Activated CD4-positive, alpha-beta memory T cell treated with anti-CD3 and anti-CD28 coated beads, Interleukin-2, amount 10 ng/mL, durations not matched to agents 7 days and 5 days (primary cell): ENCODE measurements at regions of chr6 and their contacts with region 1.

Region 1: DNA sequence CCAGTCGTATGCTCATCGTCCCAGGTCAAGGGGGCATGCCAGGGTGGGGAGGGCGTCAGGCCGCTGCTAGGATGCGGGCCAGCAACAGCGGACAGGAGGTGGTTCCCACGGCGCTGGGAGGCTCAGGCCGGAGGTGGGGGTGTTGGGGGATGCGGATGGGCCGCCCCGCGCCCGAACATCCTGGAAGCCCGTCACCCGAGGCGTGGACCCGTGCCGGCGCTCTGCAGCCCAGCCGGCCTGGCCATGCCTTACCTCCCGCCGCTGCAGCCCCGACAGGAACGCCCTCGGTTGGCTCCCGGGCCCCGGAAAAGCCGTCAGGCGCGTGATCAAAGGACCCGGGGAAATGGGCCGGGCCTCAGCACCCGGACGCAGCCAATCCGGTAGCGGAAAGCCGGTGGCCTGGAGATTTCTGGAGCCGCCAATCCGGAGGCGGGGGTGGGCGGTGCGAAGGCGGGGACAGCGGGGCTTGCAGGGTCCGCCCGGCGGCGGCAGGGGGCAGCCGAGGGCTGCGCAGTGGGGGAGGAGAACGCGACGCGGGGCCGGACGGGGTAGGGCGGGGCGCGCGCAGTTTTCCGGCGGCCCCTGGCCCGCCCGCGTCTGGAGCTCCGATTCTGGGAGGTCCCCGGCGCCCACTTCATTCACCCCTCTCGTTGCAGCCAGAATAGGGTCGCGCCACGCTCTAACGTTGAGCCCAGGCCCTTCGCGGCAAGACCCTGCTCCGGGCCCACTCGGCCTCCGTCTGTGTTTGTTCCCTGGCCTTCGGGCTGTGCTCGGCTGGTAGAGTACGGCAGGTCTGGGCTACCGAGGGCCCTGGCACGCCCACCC is at the start of gene SMIM29:
- DNase-seq: peak; percentile 98
- H3K4me3 Mint-ChIP-seq: peak within 1 kb of the TSS; percentile 95
- H3K27ac Mint-ChIP-seq: peak within 1 kb of the TSS; percentile 94
- H3K4me1 Mint-ChIP-seq: peaks cover 53% of the 10 kb centered on the region
- H3K27me3 Mint-ChIP-seq: peaks cover 3% of the 10 kb centered on the region
- total RNA-seq, gene SMIM29: 38.3 to 38.4 TPM

Region 2: DNA sequence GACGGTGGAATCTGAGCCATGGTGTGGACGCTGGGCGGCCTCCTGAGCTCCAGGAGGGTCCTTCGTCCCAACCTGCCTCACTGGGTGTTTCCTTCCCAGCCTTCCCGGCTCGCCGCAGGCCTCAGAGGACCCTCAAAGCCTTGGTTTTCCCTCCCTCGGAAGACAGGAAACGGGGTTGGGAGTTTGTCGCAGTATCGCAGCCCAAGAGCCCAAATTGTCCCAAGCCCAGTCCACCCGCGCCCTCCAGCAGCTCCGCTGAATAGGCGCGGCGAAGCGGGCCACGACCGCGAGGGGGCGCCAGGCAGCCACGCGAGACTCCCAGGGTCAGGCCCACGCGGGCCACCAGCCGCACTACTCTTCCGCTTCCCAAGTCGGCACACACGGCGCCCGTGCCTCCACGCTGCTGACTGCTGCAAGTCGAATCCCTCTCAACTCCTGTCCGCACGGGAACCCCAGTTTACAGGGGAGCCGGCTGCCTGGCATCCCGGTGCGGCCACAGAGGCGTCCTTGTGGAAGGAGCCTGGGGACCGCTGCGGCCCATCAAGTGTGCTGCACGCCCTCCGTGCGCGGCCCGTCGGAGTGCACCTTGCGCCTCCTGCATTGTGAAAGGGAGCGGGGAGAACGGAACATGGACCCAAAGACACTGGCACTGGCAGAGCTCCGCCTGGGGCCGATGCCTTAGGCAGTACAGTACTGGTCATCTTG is 52.7 kb before region 1 on chr6:
- CTCF ChIA-PET with region 1: interaction called, 16 read pairs
- POLR2A ChIA-PET with region 1: interaction called, 4 read pairs
- DNase-seq: peak; percentile 87
- H3K4me3 Mint-ChIP-seq: peak overlapping the region; percentile 73
- H3K27ac Mint-ChIP-seq: no peak overlapping the region
- H3K4me1 Mint-ChIP-seq: peaks cover 3% of the 10 kb centered on the region
- H3K27me3 Mint-ChIP-seq: peaks cover 11% of the 10 kb centered on the region

Region 3: DNA sequence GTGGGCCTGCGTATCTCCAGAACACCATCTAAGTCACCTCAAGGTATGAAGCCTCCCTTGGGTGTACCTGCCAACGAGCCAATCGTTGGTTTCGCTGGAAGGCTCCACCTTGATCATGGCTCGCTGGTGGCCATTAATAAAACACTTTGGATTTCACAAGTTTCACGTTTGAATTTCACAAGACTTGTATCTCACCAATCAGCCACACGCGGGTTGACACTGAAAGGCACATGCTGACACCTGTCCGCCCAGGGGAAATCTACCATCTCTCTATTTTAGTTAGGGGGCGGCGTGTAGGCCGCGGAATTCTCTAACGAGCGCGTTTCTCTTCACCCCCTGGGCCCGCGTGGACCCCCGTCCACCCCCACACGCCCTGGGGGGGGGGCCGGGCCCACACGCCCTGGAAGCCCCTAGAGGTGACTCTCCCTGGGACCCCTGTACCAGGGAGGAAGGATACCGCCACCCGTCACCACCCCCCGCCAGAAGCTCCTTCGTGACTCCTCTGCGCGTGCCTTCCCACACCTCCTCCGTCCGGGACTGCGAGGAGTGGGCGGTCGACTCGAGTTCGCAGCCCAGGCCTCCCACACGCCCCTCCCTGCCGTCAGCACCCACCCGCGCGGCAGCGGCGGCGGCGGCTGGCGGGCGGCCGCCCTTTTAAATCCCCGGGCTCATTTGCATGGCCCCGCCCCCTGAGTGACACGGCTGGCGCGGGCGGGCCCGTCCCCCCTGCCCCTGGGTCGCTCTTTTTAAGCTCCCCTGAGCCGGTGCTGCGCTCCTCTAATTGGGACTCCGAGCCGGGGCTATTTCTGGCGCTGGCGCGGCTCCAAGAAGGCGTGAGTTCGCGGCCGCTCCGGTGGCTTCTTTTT is 12.6 kb before region 1 on chr6 and contains the start of gene HMGA1:
- CTCF ChIA-PET with region 1: interaction called, 13 read pairs
- POLR2A ChIA-PET with region 1: interaction called, 47 read pairs
- DNase-seq: peak; percentile 90
- H3K4me3 Mint-ChIP-seq: peak within 1 kb of the TSS; percentile 85
- H3K27ac Mint-ChIP-seq: peak within 1 kb of the TSS; percentile 88
- H3K4me1 Mint-ChIP-seq: peaks cover 38% of the 10 kb centered on the region
- H3K27me3 Mint-ChIP-seq: no peaks in the 10 kb centered on the region
- total RNA-seq, gene HMGA1: 269 to 282 TPM

Region 4: DNA sequence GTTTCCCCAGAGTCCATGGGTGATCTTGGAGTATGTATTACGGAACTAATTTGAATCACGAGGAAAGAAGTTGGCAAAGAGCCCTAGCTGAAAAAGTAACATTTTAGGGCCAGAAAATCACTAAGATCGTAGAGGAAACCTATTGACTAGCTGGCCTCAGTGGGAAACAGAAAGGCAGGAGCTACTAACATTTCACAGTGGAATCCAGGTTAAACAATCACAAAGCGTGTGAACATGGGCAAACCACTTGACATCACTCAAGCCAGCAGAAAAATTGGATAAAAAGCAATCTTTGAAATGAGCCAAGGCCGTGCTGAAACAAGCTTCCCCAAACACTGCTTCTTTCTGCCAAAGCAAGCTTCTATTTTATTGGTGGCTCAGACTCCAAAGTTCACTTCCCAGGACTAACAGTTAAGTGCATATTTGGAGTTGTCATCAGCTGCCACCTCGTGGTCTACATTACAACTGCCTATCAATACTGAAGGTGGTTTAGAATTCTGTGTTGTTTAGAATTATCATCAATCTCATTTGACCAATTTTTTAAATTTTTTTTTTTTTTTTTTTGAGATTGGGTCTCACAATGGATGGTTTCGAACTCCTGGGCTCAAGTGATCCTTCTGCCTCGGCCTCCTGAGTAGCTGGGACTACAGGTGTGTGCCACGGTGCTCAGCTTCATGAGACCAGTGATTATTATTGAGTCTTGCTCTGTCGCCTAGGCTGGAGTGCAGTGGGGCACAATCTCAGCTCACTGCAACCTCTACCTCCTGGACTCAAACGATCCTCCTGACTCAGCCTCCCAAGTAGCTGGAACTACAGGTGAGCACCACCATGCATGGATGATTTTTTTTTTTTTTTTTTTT is 166.3 kb after region 1 on chr6:
- CTCF ChIA-PET with region 1: interaction called, 71 read pairs
- POLR2A ChIA-PET with region 1: interaction called, 10 read pairs
- DNase-seq: peak; percentile 35
- H3K4me3 Mint-ChIP-seq: no peak overlapping the region
- H3K27ac Mint-ChIP-seq: no peak overlapping the region
- H3K4me1 Mint-ChIP-seq: peaks cover 15% of the 10 kb centered on the region
- H3K27me3 Mint-ChIP-seq: no peaks in the 10 kb centered on the region

Region 5: GRCh38 chr6:34459899-34460593 is 211.1 kb after region 1 on chr6:
- CTCF ChIA-PET with region 1: interaction called, 10 read pairs
- POLR2A ChIA-PET with region 1: no interaction called
- DNase-seq: peak; percentile 59
- H3K4me3 Mint-ChIP-seq: no peak overlapping the region
- H3K27ac Mint-ChIP-seq: no peak overlapping the region
- H3K4me1 Mint-ChIP-seq: no peaks in the 10 kb centered on the region
- H3K27me3 Mint-ChIP-seq: peaks cover 16% of the 10 kb centered on the region